ENCODE measurements at regions of chr11 and their contacts with region 1.

Region 1: DNA sequence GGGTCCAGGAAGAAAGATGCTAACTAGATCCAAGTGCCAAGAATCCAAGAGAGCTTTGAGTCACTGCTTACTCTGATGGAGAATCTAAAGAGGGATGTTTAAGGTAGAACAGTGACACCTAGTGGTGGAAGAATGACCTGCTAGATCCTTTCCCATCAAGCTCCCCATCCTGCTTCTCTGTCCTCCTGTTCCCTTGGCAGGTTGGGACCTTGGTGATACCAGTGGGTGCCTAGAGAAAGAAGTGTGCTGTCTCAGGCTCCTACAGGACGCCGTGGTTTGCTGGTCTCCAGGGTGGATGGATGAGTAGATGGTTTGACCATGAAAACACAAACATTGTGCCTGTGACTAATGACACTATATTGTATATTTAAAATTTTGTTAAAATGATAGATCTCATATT is 383.7 kb downstream of the TMEM135 start:
- DNase-seq: peak; percentile 60
- ATAC-seq: no peak
- H3K4me3 ChIP-seq: no peak overlapping the region
- H3K4me3 Mint-ChIP-seq: no peak overlapping the region
- H3K27ac ChIP-seq: no peak overlapping the region
- H3K27ac Mint-ChIP-seq: no peak overlapping the region
- H3K4me1 ChIP-seq: no peaks in the 10 kb centered on the region
- H3K4me1 Mint-ChIP-seq: no peaks in the 10 kb centered on the region
- H3K27me3 ChIP-seq: no peaks in the 10 kb centered on the region
- H3K27me3 Mint-ChIP-seq: peaks cover 2% of the 10 kb centered on the region
- CTCF ChIP-seq: peak; percentile 88

Region 2: GRCh38 chr11:86456052-86456939 is 965.1 kb before region 1 on chr11:
- CTCF ChIA-PET with region 1: interaction called, 3 read pairs
- POLR2A ChIA-PET with region 1: no interaction called
- intact Hi-C with region 1: loop called (anchors 10 kb)
- DNase-seq: peak; percentile 67
- ATAC-seq: peak; percentile 54
- H3K4me3 ChIP-seq: no peak overlapping the region
- H3K4me3 Mint-ChIP-seq: no peak overlapping the region
- H3K27ac ChIP-seq: no peak overlapping the region
- H3K27ac Mint-ChIP-seq: no peak overlapping the region
- H3K4me1 ChIP-seq: peaks cover 0 to 3% of the 10 kb centered on the region in 2 donors
- H3K4me1 Mint-ChIP-seq: no peaks in the 10 kb centered on the region
- H3K27me3 ChIP-seq: no peaks in the 10 kb centered on the region
- H3K27me3 Mint-ChIP-seq: peaks cover 4% of the 10 kb centered on the region
- CTCF ChIP-seq: peak; percentile 91

Region 3: DNA sequence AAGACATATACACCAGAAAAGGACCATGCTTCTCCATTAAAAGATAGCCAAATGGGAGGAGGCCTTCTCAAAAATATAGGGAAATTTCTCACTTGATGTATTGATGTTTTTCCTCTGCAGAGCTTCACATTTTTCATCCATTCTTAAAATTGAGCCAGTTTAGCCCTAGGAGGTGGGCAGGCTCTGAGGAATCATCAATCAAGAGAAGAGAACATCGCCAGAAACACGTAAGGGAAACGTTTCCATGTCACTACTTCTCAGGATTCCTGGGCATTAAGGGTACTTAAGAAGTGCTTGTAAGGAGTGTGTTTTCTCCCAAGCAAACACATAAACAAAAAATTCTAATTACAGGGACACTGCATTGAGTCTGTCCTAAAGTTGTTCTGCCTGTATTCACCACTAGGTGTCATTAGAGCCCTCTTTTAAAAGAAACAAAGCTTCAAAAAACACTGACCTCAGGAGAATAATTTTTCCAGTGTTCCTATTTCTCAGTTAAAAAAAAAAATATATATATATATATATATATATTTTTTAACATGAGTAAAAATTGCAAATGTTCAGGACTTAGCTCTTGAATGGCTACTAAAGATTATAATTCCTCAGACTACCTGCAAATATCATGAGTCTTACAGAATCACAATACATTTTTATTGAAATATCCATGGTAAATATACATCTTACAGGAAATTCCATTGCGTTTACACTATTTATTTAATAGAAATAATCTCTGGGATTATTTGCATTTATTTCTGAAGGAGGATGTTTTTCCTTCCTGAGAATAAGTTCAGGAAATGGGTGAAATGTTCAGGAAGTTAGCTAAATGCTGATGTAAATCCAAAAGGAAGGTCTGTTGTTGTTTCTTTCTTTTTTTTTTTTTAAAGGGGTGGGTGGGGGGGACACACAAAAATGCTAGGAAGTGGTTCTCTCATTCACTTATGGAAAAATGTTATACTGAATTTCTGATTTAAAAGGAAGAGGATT is 482.2 kb before region 1 on chr11:
- CTCF ChIA-PET with region 1: interaction called, 42 read pairs
- POLR2A ChIA-PET with region 1: no interaction called
- intact Hi-C with region 1: no loop called
- DNase-seq: peak; percentile 49
- ATAC-seq: no peak
- H3K4me3 ChIP-seq: no peak overlapping the region
- H3K4me3 Mint-ChIP-seq: no peak overlapping the region
- H3K27ac ChIP-seq: no peak overlapping the region
- H3K27ac Mint-ChIP-seq: no peak overlapping the region
- H3K4me1 ChIP-seq: no peaks in the 10 kb centered on the region
- H3K4me1 Mint-ChIP-seq: no peaks in the 10 kb centered on the region
- H3K27me3 ChIP-seq: no peaks in the 10 kb centered on the region
- H3K27me3 Mint-ChIP-seq: peaks cover 10% of the 10 kb centered on the region
- CTCF ChIP-seq: peak; percentile 76

Region 4: GRCh38 chr11:87136236-87136635 is 285.2 kb before region 1 on chr11:
- CTCF ChIA-PET with region 1: no interaction called
- POLR2A ChIA-PET with region 1: no interaction called
- intact Hi-C with region 1: no loop called
- DNase-seq: no peak
- ATAC-seq: no peak
- H3K4me3 ChIP-seq: no peak overlapping the region
- H3K4me3 Mint-ChIP-seq: no peak overlapping the region
- H3K27ac ChIP-seq: no peak overlapping the region
- H3K27ac Mint-ChIP-seq: no peak overlapping the region
- H3K4me1 ChIP-seq: no peaks in the 10 kb centered on the region
- H3K4me1 Mint-ChIP-seq: no peaks in the 10 kb centered on the region
- H3K27me3 ChIP-seq: no peaks in the 10 kb centered on the region
- H3K27me3 Mint-ChIP-seq: no peaks in the 10 kb centered on the region
- CTCF ChIP-seq: no peak

Region 5: DNA sequence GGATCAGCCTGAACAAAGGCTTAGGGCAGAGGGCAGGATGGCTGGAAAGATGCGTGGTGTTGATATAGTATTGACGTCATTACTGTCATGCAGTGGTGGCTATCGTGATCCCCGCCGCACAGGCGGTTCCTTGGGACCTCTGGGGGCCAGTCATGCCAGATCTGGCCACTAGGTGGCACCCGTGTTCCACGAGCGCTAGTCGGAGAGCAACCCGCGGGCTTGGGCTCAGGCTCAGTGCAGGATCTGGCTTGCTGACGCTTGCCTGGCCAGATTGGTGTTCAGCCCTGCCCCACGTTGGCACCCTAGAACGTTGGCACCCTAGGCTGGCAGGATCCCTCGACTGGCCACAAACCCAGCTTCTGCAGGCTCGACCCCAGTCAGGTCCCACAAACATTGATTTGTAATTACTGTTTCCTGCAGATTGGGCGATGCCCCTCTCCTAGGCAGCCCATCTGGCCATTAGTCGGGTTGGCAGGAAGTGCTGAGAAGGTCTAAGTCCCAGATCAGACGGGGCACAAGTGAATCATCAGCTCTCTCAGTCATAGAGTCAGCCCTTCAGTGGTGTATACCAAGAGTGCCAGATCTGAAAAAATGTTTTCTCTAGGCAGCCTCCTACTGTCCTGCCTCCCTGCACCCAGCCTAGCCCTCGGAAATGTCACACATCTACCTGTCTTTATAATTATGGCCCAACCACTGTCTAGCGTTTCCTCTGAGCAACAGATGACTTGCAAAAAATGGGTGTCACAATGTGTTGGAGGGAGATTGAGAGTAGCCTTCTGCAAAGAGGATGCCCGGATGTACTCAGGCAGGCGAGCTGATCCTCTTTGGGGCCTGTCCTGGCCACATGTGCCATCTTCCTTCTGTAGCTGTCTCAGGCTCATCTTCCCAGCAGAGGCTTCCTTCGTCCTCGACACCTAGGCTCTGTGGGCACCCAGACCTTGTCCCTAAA is 68.4 kb before region 1 on chr11:
- CTCF ChIA-PET with region 1: interaction called, 65 read pairs
- POLR2A ChIA-PET with region 1: no interaction called
- intact Hi-C with region 1: no loop called
- DNase-seq: peak; percentile 76
- ATAC-seq: peak; percentile 88
- H3K4me3 ChIP-seq: no peak overlapping the region
- H3K4me3 Mint-ChIP-seq: no peak overlapping the region
- H3K27ac ChIP-seq: no peak overlapping the region
- H3K27ac Mint-ChIP-seq: no peak overlapping the region
- H3K4me1 ChIP-seq: peaks cover 7% of the 10 kb centered on the region in 2 donors
- H3K4me1 Mint-ChIP-seq: peaks cover 14% of the 10 kb centered on the region
- H3K27me3 ChIP-seq: peaks cover 0 to 4% (median 1%) of the 10 kb centered on the region in 4 experiments
- H3K27me3 Mint-ChIP-seq: peaks cover 10% of the 10 kb centered on the region
- CTCF ChIP-seq: peak; percentile 97

Region 6: DNA sequence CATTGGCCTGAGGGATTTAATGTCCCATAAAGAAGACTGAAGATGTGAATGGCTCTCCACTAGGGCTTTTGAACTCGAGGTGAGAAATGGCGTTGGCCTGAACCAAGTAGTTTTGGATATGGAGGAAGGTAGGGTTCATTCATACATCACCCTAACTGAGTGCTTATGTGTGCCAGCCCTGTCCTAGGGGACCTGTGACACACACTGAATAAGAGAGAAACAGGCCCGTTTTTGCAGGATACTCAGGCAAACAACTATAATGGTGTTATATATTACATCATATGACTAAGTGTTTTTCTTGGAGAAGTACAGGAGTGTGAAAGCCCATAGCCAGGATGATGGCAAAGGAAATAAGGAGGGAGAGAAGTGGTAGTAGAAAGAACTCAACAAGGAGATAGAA is 15.6 kb before region 1 on chr11:
- CTCF ChIA-PET with region 1: interaction called, 47 read pairs
- POLR2A ChIA-PET with region 1: no interaction called
- intact Hi-C with region 1: no loop called
- DNase-seq: no peak
- ATAC-seq: no peak
- H3K4me3 ChIP-seq: no peak overlapping the region
- H3K4me3 Mint-ChIP-seq: no peak overlapping the region
- H3K27ac ChIP-seq: no peak overlapping the region
- H3K27ac Mint-ChIP-seq: no peak overlapping the region
- H3K4me1 ChIP-seq: no peaks in the 10 kb centered on the region
- H3K4me1 Mint-ChIP-seq: no peaks in the 10 kb centered on the region
- H3K27me3 ChIP-seq: peaks cover 0 to 4% (median 0%) of the 10 kb centered on the region in 4 experiments
- H3K27me3 Mint-ChIP-seq: peaks cover under 1% of the 10 kb centered on the region
- CTCF ChIP-seq: no peak

Region 7: DNA sequence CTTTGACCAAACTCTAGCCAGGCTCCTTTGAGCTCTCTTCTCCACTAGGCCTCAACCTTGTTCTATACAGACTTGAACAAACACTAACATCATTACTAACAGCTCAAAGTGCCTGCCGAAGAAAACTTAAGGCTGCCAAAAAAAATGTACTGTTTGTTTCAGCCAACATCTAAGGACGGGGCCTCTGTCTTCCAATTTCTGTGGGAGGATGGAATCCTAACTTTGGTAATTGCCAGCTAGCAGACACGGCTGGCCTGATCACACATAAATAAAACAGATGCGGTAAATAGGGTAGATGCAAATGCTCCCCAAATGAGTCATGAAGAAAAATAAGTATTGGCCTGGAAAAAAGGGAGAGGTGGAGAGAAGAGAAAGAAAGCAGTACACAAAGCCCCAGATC is 10.6 kb after region 1 on chr11:
- CTCF ChIA-PET with region 1: interaction called, 13 read pairs
- POLR2A ChIA-PET with region 1: no interaction called
- intact Hi-C with region 1: no loop called
- DNase-seq: no peak
- ATAC-seq: no peak
- H3K4me3 ChIP-seq: no peak overlapping the region
- H3K4me3 Mint-ChIP-seq: no peak overlapping the region
- H3K27ac ChIP-seq: no peak overlapping the region
- H3K27ac Mint-ChIP-seq: no peak overlapping the region
- H3K4me1 ChIP-seq: no peaks in the 10 kb centered on the region
- H3K4me1 Mint-ChIP-seq: no peaks in the 10 kb centered on the region
- H3K27me3 ChIP-seq: no peaks in the 10 kb centered on the region
- H3K27me3 Mint-ChIP-seq: no peaks in the 10 kb centered on the region
- CTCF ChIP-seq: no peak

Region 8: GRCh38 chr11:87460842-87461637 is 39.6 kb after region 1 on chr11:
- CTCF ChIA-PET with region 1: no interaction called
- POLR2A ChIA-PET with region 1: no interaction called
- intact Hi-C with region 1: no loop called
- DNase-seq: no peak
- ATAC-seq: no peak
- H3K4me3 ChIP-seq: no peak overlapping the region
- H3K4me3 Mint-ChIP-seq: no peak overlapping the region
- H3K27ac ChIP-seq: no peak overlapping the region
- H3K27ac Mint-ChIP-seq: no peak overlapping the region
- H3K4me1 ChIP-seq: no peaks in the 10 kb centered on the region
- H3K4me1 Mint-ChIP-seq: no peaks in the 10 kb centered on the region
- H3K27me3 ChIP-seq: no peaks in the 10 kb centered on the region
- H3K27me3 Mint-ChIP-seq: no peaks in the 10 kb centered on the region
- CTCF ChIP-seq: no peak

Region 9: DNA sequence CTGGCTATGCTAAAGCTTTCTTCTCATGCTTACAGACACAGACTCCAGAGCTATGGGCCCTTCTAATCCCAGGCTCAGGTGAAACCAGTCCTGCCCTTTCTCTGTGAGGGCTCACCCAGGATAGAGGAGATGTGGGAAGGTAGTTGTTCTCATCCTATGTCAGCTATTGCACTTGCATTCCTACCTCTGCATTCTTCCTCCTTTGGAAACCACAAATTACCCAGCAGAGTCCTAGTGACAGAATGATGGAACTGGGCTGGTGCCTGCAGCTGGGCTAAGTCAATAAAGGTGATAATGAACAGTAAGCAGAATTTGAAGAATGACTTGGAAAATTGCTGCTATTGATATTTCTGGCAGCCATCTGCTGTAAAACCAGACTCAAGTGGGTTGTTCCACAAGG is 176.3 kb after region 1 on chr11:
- CTCF ChIA-PET with region 1: no interaction called
- POLR2A ChIA-PET with region 1: no interaction called
- intact Hi-C with region 1: no loop called
- DNase-seq: no peak
- ATAC-seq: no peak
- H3K4me3 ChIP-seq: no peak overlapping the region
- H3K4me3 Mint-ChIP-seq: no peak overlapping the region
- H3K27ac ChIP-seq: no peak overlapping the region
- H3K27ac Mint-ChIP-seq: no peak overlapping the region
- H3K4me1 ChIP-seq: no peaks in the 10 kb centered on the region
- H3K4me1 Mint-ChIP-seq: no peaks in the 10 kb centered on the region
- H3K27me3 ChIP-seq: no peaks in the 10 kb centered on the region
- H3K27me3 Mint-ChIP-seq: no peaks in the 10 kb centered on the region
- CTCF ChIP-seq: no peak

Region 10: DNA sequence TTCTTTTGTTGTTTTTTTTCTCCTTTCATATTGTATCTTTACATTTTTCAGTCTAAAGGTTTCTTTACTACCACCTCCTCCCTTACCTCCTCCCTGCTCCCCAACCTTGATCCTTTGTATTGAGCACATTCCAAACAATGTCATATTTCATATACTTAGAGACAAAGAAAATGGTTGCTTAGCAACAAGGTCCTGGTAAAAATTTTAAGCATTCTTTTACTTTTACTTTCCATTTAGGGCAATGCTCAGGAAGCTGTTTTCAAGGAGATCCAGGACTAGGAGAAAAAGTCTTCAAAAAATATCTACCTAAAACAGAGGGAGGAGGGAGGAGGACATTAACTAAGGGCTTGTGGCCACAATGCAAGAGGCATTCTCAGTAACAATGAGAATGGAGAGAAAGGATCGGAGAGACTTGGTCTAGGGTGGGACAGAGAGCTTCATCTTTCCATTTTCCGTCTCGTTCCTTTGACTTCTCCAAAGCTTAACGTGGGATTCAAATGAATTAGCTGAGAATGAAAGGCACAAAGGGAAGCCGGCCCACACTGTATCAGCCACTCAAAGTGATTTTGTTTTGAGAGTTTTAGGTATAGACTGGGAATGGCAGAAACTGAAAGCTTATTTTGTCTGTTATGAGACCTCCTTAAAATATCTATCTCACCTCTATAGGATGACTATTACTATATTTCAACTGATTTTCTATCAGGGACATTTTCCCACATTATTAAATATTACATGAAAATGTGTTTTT is 298.1 kb after region 1 on chr11:
- CTCF ChIA-PET with region 1: no interaction called
- POLR2A ChIA-PET with region 1: no interaction called
- intact Hi-C with region 1: no loop called
- DNase-seq: no peak
- ATAC-seq: no peak
- H3K4me3 ChIP-seq: no peak overlapping the region
- H3K4me3 Mint-ChIP-seq: no peak overlapping the region
- H3K27ac ChIP-seq: no peak overlapping the region
- H3K27ac Mint-ChIP-seq: no peak overlapping the region
- H3K4me1 ChIP-seq: no peaks in the 10 kb centered on the region
- H3K4me1 Mint-ChIP-seq: no peaks in the 10 kb centered on the region
- H3K27me3 ChIP-seq: no peaks in the 10 kb centered on the region
- H3K27me3 Mint-ChIP-seq: peaks cover 3% of the 10 kb centered on the region
- CTCF ChIP-seq: no peak

Measured in B cell (primary cell).